ENCODE measurements at regions of chr18 and their contacts with region 1.

Region 1: GRCh38 chr18:27211569-27211968 is 26.5 kb upstream of the CHST9 start:
- DNase-seq: no peak
- ATAC-seq: no peak
- H3K4me3 ChIP-seq: no peak overlapping the region
- H3K27ac ChIP-seq: no peak overlapping the region
- H3K4me1 ChIP-seq: no peaks in the 10 kb centered on the region
- H3K27me3 ChIP-seq: no peaks in the 10 kb centered on the region
- CTCF ChIP-seq: no peak
- EP300 ChIP-seq: no peak
- POLR2A ChIP-seq: no peak
- RAD21 ChIP-seq: no peak

Region 2: DNA sequence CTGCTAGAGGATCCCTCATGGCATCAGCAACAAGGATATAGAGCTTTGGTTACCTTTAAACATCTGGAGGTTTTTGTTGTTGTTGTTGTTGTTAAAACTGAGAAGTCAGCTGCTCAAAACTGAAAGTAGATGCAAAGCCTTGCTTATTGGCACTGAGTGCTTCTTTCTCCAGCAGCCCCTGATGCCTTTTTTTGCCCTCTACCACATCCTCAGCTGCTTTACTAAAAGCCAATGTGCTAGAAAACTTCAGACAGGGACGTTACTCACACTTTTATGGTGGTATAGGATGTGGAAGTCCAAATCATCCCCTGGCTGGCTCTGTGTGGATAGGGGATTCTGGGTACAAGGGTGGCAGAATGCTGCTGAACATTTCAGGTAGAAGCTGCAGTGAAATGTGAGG is 51.8 kb after region 1 on chr18:
- CTCF ChIA-PET with region 1: no interaction called
- POLR2A ChIA-PET with region 1: no interaction called
- RAD21 ChIA-PET with region 1: no interaction called
- SMC1A ChIA-PET with region 1: no interaction called
- in situ Hi-C with region 1: no loop called
- intact Hi-C with region 1: loop called (anchors 10 kb)
- DNase-seq: no peak
- ATAC-seq: no peak
- H3K4me3 ChIP-seq: no peak overlapping the region
- H3K27ac ChIP-seq: no peak overlapping the region
- H3K4me1 ChIP-seq: no peaks in the 10 kb centered on the region
- H3K27me3 ChIP-seq: no peaks in the 10 kb centered on the region
- CTCF ChIP-seq: no peak
- EP300 ChIP-seq: no peak
- POLR2A ChIP-seq: no peak
- RAD21 ChIP-seq: no peak